ENCODE measurements at regions of chr5 and their contacts with region 1.

Region 1: DNA sequence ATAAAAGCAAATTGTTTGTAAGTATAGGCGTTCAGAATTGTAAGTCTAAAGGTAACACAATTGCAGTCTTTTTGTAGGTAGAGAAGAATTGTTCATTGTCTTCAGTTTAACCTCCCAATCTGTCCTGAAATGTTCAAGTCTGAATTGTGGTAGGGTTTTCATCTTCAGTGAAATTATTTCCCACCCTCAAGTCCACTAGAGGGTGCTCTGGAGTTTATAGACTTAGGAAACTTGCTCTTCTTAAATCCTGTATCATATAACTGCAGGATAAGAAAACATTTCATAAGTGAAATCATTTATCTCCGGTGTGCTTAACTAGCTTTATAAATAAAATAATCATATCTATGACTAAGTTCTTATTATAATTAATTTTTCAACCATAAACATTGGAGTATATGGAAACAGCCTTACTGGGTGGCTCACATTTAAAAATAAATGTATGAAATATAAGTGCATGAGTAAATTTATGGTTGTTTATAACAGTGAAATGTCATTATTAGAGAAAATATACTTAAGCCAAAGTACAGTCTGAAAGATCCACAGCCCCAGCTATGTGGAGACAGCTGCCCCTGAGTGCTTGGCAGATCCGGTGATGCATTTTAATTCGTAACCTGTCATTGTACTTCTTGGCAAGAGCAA is 182.4 kb upstream of the OTULINL start:
- DNase-seq: peak; percentile 73
- H3K4me3 ChIP-seq: no peak overlapping the region
- H3K27ac ChIP-seq: peak overlapping the region; percentile 37
- H3K4me1 ChIP-seq: peaks cover 42% of the 10 kb centered on the region
- H3K27me3 ChIP-seq: no peaks in the 10 kb centered on the region
- CTCF ChIP-seq: peak; percentile 43 to 51
- POLR2A ChIP-seq: no peak

Region 2: GRCh38 chr5:14447958-14448911 is 49.1 kb after region 1 on chr5:
- CTCF ChIA-PET with region 1: interaction called, 3 read pairs
- POLR2A ChIA-PET with region 1: no interaction called
- dilution Hi-C with region 1: no loop called
- intact Hi-C with region 1: loop called (anchors 2 kb)
- DNase-seq: peak; percentile 48
- H3K4me3 ChIP-seq: no peak overlapping the region
- H3K27ac ChIP-seq: peak overlapping the region; percentile 84
- H3K4me1 ChIP-seq: peaks cover 72% of the 10 kb centered on the region
- H3K27me3 ChIP-seq: no peaks in the 10 kb centered on the region
- CTCF ChIP-seq: no peak
- POLR2A ChIP-seq: no peak

Region 3: GRCh38 chr5:14463629-14464028 is 64.5 kb after region 1 on chr5:
- CTCF ChIA-PET with region 1: interaction called, 7 read pairs
- POLR2A ChIA-PET with region 1: no interaction called
- dilution Hi-C with region 1: no loop called
- intact Hi-C with region 1: loop called (anchors 5 kb)
- DNase-seq: peak; percentile 96
- H3K4me3 ChIP-seq: no peak overlapping the region
- H3K27ac ChIP-seq: peak overlapping the region; percentile 71
- H3K4me1 ChIP-seq: peaks cover 25% of the 10 kb centered on the region
- H3K27me3 ChIP-seq: no peaks in the 10 kb centered on the region
- CTCF ChIP-seq: no peak
- POLR2A ChIP-seq: peak; percentile 57

Region 4: GRCh38 chr5:14628346-14628745 is 229.2 kb after region 1 on chr5:
- CTCF ChIA-PET with region 1: no interaction called
- POLR2A ChIA-PET with region 1: no interaction called
- dilution Hi-C with region 1: loop called (anchors 25 kb)
- intact Hi-C with region 1: no loop called
- DNase-seq: peak; percentile 48
- H3K4me3 ChIP-seq: no peak overlapping the region
- H3K27ac ChIP-seq: no peak overlapping the region
- H3K4me1 ChIP-seq: no peaks in the 10 kb centered on the region
- H3K27me3 ChIP-seq: peaks cover 0 to 2% of the 10 kb centered on the region in 2 experiments
- CTCF ChIP-seq: no peak
- POLR2A ChIP-seq: no peak

Region 5: GRCh38 chr5:14650052-14650451 is 250.9 kb after region 1 on chr5:
- CTCF ChIA-PET with region 1: interaction called, 177 read pairs
- POLR2A ChIA-PET with region 1: no interaction called
- dilution Hi-C with region 1: loop called (anchors 25 kb)
- intact Hi-C with region 1: loop called (anchors 1 kb)
- DNase-seq: no peak
- H3K4me3 ChIP-seq: no peak overlapping the region
- H3K27ac ChIP-seq: no peak overlapping the region
- H3K4me1 ChIP-seq: no peaks in the 10 kb centered on the region
- H3K27me3 ChIP-seq: peaks cover 21 to 34% of the 10 kb centered on the region in 2 experiments
- CTCF ChIP-seq: no peak
- POLR2A ChIP-seq: no peak

Region 6: DNA sequence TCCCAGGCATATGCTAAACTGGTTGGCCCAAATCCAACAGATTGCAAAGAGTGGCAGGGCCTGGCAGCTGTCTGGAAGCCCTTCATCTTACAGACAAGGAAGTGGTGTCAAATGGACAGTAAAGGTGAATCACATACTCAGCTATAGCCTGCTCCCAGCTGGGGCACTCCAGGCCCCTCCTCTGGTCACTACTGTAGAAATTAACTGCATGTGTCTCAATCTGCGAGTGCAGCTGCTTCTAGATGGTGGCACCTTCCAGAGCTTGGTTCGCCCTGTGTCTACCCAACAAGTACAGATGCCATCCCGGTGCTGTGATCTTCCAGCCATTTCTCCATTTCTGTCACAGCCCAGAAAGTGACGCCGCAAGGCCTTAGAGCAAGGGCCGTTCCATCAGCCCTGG is 315.5 kb after region 1 on chr5:
- CTCF ChIA-PET with region 1: no interaction called
- POLR2A ChIA-PET with region 1: no interaction called
- dilution Hi-C with region 1: no loop called
- intact Hi-C with region 1: no loop called
- DNase-seq: no peak
- H3K4me3 ChIP-seq: no peak overlapping the region
- H3K27ac ChIP-seq: no peak overlapping the region
- H3K4me1 ChIP-seq: no peaks in the 10 kb centered on the region
- H3K27me3 ChIP-seq: no peaks in the 10 kb centered on the region
- CTCF ChIP-seq: no peak
- POLR2A ChIP-seq: no peak

Region 7: DNA sequence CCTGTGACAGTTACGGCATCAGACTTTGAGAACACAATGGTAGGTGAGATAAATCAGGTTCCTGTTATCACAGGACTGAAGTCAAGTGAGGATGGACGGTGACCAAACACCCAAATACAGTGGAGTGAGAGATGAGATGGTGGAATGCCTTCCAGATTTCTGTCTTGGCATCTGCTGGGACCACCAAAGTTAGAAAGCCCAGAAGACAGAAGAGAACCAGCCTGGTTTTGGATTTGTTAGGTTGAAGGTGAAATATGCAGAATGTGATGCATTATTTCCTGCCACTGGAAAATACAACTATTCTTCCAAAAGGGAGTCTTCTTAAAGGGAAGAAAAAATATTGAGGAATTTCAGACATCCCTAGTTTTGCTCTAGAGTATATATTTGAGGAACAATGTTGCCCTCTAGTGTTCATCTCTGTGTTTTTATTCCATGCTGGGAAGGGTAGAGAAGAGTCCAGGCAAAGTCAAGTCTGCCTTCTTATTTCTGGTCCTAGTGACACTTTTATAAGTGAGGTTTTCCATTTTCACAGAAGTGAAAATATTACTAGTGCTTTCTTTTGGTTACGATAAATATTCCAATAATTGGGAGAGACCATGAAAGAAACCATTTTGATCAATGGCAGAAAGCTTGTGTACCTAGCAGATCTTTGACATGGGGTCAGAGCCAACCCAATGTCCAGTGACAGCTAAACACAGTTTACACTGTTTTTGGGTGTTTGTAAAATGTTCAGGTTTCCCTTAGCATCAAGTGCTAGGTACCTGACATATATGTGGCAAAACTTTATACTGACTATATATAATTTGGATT is 614.7 kb after region 1 on chr5:
- CTCF ChIA-PET with region 1: no interaction called
- POLR2A ChIA-PET with region 1: no interaction called
- dilution Hi-C with region 1: no loop called
- intact Hi-C with region 1: loop called (anchors 5 kb)
- DNase-seq: peak; percentile 74
- H3K4me3 ChIP-seq: no peak overlapping the region
- H3K27ac ChIP-seq: no peak overlapping the region
- H3K4me1 ChIP-seq: peaks cover 11% of the 10 kb centered on the region
- H3K27me3 ChIP-seq: peaks cover 0 to 5% of the 10 kb centered on the region in 2 experiments
- CTCF ChIP-seq: peak; percentile 38 to 39
- POLR2A ChIP-seq: no peak

Measured in endothelial cell of umbilical vein (primary cell).